PC-9 (cell line): ENCODE measurements at regions of chr20 and their contacts with region 1.

Region 1: GRCh38 chr20:44683263-44684046 is 31.7 kb upstream of the CCN5 start:
- DNase-seq: peak; percentile 66 to 76
- H3K4me3 ChIP-seq: no peak overlapping the region
- H3K27ac ChIP-seq: no peak overlapping the region
- H3K4me1 ChIP-seq: peaks cover 16% of the 10 kb centered on the region
- H3K27me3 ChIP-seq: no peaks in the 10 kb centered on the region
- CTCF ChIP-seq: peak; percentile 85

Region 2: GRCh38 chr20:44217342-44218092 is 465.9 kb before region 1 on chr20:
- CTCF ChIA-PET with region 1: interaction called, 4 read pairs
- POLR2A ChIA-PET with region 1: no interaction called
- intact Hi-C with region 1: loop called (anchors 5 kb)
- DNase-seq: peak; percentile 58 to 76
- H3K4me3 ChIP-seq: no peak overlapping the region
- H3K27ac ChIP-seq: no peak overlapping the region
- H3K4me1 ChIP-seq: no peaks in the 10 kb centered on the region; the same call in 1 of the 2 replicates
- H3K27me3 ChIP-seq: no peaks in the 10 kb centered on the region
- CTCF ChIP-seq: peak; percentile 98

Region 3: GRCh38 chr20:44475694-44476560 is 207.5 kb before region 1 on chr20 and contains the start of gene TTPAL:
- CTCF ChIA-PET with region 1: interaction called, 3 read pairs
- POLR2A ChIA-PET with region 1: interaction called, 4 read pairs
- intact Hi-C with region 1: loop called (anchors 2 kb)
- DNase-seq: peak; percentile 77 to 93
- H3K4me3 ChIP-seq: peak within 1 kb of the TSS; percentile 88
- H3K27ac ChIP-seq: peak within 1 kb of the TSS; percentile 37
- H3K4me1 ChIP-seq: peaks cover 22% of the 10 kb centered on the region
- H3K27me3 ChIP-seq: no peaks in the 10 kb centered on the region
- CTCF ChIP-seq: peak; percentile 31; the same call in 1 of the 2 replicates
- total RNA-seq, gene TTPAL: 28.5 and 31.3 TPM in 2 replicates

Region 4: GRCh38 chr20:44521484-44522481 is 161.7 kb before region 1 on chr20 and contains the start of gene SERINC3:
- CTCF ChIA-PET with region 1: no interaction called
- POLR2A ChIA-PET with region 1: no interaction called
- intact Hi-C with region 1: loop called (anchors 5 kb)
- DNase-seq: peak; percentile 93 to 96
- H3K4me3 ChIP-seq: peak within 1 kb of the TSS; percentile 92
- H3K27ac ChIP-seq: peak within 1 kb of the TSS; percentile 72
- H3K4me1 ChIP-seq: peaks cover 39% of the 10 kb centered on the region
- H3K27me3 ChIP-seq: no peaks in the 10 kb centered on the region
- CTCF ChIP-seq: 0 out of 2 replicates have a peak, but pooled peaks have one; percentile 39
- total RNA-seq, gene SERINC3: 76.0 and 110 TPM in 2 replicates

Region 5: DNA sequence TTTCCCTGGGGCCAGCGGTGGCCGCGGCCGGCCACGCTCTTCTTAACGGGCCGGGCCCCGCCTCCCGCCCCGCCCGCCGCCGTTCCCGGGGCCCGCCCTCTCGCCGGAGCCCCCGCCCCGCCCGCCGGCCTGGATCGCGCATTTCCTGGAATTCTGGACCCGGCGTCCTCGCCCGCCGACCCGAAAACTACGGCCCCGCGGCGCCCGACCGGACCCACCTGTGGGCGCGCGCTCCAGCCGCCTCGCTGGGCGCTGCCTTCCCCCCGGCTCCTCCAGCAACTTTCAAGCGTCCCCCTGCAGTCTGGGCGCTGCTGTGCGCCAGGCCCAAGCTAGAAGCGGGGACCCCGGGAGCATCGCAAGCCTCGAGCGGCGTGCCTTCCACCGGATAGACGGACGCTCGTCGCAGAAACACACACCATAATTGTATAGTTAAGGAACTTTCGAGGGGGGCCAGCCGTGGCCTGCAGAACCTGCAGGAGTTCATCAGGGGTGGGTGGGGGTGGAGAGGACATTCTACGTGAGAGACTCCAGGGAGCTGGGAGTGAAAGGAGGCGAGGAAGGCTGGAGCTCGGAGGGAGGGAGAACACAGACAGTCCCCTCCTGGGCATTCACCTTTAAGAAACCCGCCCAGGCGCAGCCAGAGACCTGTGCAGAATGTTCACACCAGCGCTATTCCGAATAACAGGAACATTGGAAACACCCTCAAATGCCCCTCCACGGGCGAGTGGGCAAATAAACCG is 31.6 kb before region 1 on chr20 and contains the start of gene ADA:
- CTCF ChIA-PET with region 1: interaction called, 6 read pairs
- POLR2A ChIA-PET with region 1: interaction called, 6 read pairs
- intact Hi-C with region 1: loop called (anchors 1 kb)
- DNase-seq: peak; percentile 48 to 63
- H3K4me3 ChIP-seq: peak within 1 kb of the TSS; percentile 95
- H3K27ac ChIP-seq: no peak within 1 kb of the TSS
- H3K4me1 ChIP-seq: peaks cover 14% of the 10 kb centered on the region; the same call in 1 of the 2 replicates
- H3K27me3 ChIP-seq: no peaks in the 10 kb centered on the region
- CTCF ChIP-seq: no peak
- total RNA-seq, gene ADA: 28.2 and 32.9 TPM in 2 replicates

Region 6: GRCh38 chr20:44747166-44748004 is 63.9 kb after region 1 on chr20:
- CTCF ChIA-PET with region 1: interaction called, 9 read pairs
- POLR2A ChIA-PET with region 1: no interaction called
- intact Hi-C with region 1: loop called (anchors 1 kb)
- DNase-seq: peak; percentile 93 to 94
- H3K4me3 ChIP-seq: peak overlapping the region; percentile 11; the same call in 1 of the 2 replicates
- H3K27ac ChIP-seq: peak overlapping the region; percentile 89
- H3K4me1 ChIP-seq: peaks cover 22% of the 10 kb centered on the region
- H3K27me3 ChIP-seq: peaks cover 42% of the 10 kb centered on the region
- CTCF ChIP-seq: peak; percentile 95

Region 7: DNA sequence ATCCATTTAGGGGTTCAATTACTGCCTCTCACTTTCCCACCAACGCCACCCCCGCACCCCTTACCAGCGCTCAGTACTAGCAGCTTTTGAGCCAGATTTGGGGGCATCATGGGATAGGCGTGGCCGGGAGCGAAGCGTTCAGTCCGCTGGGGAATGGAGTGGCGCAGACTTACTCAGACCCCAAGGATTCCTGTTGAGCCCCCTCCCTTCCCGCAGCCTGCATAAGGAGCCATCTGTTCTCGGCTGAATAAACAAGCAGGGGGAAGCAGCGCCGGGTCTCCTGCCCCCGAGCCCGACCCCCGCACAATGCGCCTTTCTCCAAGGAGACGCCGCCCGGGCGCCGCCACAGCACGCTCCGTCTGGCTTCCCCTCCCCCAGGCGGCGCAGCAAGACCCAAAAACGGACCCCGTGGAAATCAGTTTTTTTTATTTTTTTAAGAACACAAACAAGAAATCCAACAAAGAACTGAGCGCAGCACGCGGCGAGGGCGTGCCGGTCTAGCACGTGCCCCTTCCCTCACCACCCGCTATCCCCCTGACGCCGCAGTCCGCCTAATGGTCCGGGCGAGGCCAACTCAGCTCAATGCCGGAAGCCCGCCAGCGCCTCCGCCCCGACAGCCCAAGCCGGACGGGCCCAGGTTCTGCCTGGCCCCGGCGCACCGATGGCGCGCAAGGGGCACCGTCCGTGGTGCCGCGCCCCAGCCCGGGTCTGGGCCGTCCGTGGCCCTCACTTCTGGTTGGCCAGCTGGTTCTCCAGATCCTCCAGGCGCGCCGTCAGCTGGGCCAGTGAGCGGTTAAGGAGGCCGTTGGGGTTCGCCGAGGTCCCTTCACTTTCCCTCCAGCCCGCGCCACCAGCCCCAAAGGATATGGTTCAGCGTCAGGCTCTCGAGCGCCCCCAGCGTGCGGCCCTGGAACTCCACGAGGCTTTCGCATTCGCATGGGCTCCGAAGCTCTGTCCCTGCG is 609.9 kb after region 1 on chr20:
- CTCF ChIA-PET with region 1: no interaction called
- POLR2A ChIA-PET with region 1: no interaction called
- intact Hi-C with region 1: loop called (anchors 10 kb)
- DNase-seq: peak; percentile 61 to 91
- H3K4me3 ChIP-seq: peak overlapping the region; percentile 60
- H3K27ac ChIP-seq: no peak overlapping the region
- H3K4me1 ChIP-seq: peaks cover 15% of the 10 kb centered on the region
- H3K27me3 ChIP-seq: no peaks in the 10 kb centered on the region
- CTCF ChIP-seq: peak; percentile 97